ENCODE measurements at regions of chr12 and their contacts with region 1.

Region 1: GRCh38 chr12:8108808-8109398 is 14.5 kb upstream of the CLEC4A start:
- DNase-seq: peak; percentile 85
- H3K4me3 Mint-ChIP-seq: no peak overlapping the region
- H3K27ac Mint-ChIP-seq: no peak overlapping the region
- H3K4me1 Mint-ChIP-seq: no peaks in the 10 kb centered on the region
- H3K27me3 Mint-ChIP-seq: no peaks in the 10 kb centered on the region

Region 2: GRCh38 chr12:8011331-8011730 is 97.6 kb before region 1 on chr12:
- CTCF ChIA-PET with region 1: no interaction called
- POLR2A ChIA-PET with region 1: no interaction called
- intact Hi-C with region 1: no loop called
- DNase-seq: no peak
- H3K4me3 Mint-ChIP-seq: no peak overlapping the region
- H3K27ac Mint-ChIP-seq: no peak overlapping the region
- H3K4me1 Mint-ChIP-seq: no peaks in the 10 kb centered on the region
- H3K27me3 Mint-ChIP-seq: peaks cover 15% of the 10 kb centered on the region

Region 3: GRCh38 chr12:8226355-8226754 is 117.5 kb after region 1 on chr12:
- CTCF ChIA-PET with region 1: interaction called, 72 read pairs
- POLR2A ChIA-PET with region 1: no interaction called
- intact Hi-C with region 1: no loop called
- DNase-seq: no peak
- H3K4me3 Mint-ChIP-seq: no peak overlapping the region
- H3K27ac Mint-ChIP-seq: no peak overlapping the region
- H3K4me1 Mint-ChIP-seq: peaks cover 2% of the 10 kb centered on the region
- H3K27me3 Mint-ChIP-seq: peaks cover 4% of the 10 kb centered on the region

Measured in activated CD4-positive, alpha-beta memory T cell treated with anti-CD3 and anti-CD28 coated beads for 36 hours (primary cell).